GM12878 (cell line): ENCODE measurements at regions of chr19 and their contacts with region 1.

Region 1: GRCh38 chr19:49331616-49332055 is 3.6 kb upstream of the CD37 start:
- DNase-seq: peak; percentile 81
- ATAC-seq: peak; percentile 71
- H3K4me3 ChIP-seq: peak overlapping the region; percentile 50
- H3K27ac ChIP-seq: peak overlapping the region; percentile 87
- H3K4me1 ChIP-seq: peaks cover 79% of the 10 kb centered on the region
- H3K27me3 ChIP-seq: no peaks in the 10 kb centered on the region
- CTCF ChIP-seq: no peak
- EP300 ChIP-seq: no peak
- POLR2A ChIP-seq: no peak
- RAD21 ChIP-seq: no peak

Region 2: GRCh38 chr19:49272184-49272583 is 59.5 kb before region 1 on chr19:
- CTCF ChIA-PET with region 1: interaction called, 11 read pairs
- POLR2A ChIA-PET with region 1: interaction called, 6 read pairs
- RAD21 ChIA-PET with region 1: no interaction called
- SMC1A ChIA-PET with region 1: no interaction called
- in situ Hi-C with region 1: no loop called
- intact Hi-C with region 1: no loop called
- DNase-seq: no peak
- ATAC-seq: no peak
- H3K4me3 ChIP-seq: no peak overlapping the region
- H3K27ac ChIP-seq: no peak overlapping the region
- H3K4me1 ChIP-seq: no peaks in the 10 kb centered on the region
- H3K27me3 ChIP-seq: no peaks in the 10 kb centered on the region
- CTCF ChIP-seq: no peak
- EP300 ChIP-seq: no peak
- POLR2A ChIP-seq: no peak
- RAD21 ChIP-seq: no peak

Region 3: DNA sequence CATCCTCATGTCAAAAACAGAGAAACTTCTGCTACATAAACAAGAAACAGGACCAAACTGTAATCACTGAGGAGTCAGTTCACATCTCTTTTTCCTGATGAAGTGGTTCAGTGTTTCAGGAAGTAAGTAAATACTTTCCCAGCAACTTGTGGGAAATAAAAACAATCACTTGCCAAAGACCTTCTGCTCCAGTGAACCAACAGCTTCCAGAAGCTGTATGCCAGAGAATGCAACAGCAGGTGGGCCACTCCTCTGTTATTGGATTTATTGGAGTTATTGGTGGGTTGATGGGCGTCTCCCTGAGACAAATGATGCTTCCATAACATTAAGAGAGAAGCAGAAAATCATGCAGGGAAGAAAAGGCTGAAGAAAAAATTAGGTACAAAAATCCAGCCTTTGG is 16.5 kb before region 1 on chr19:
- CTCF ChIA-PET with region 1: interaction called, 12 read pairs
- POLR2A ChIA-PET with region 1: interaction called, 3 read pairs
- RAD21 ChIA-PET with region 1: no interaction called
- SMC1A ChIA-PET with region 1: interaction called, 5 read pairs
- in situ Hi-C with region 1: no loop called
- intact Hi-C with region 1: no loop called
- DNase-seq: no peak
- ATAC-seq: no peak
- H3K4me3 ChIP-seq: no peak overlapping the region
- H3K27ac ChIP-seq: no peak overlapping the region
- H3K4me1 ChIP-seq: no peaks in the 10 kb centered on the region
- H3K27me3 ChIP-seq: no peaks in the 10 kb centered on the region
- CTCF ChIP-seq: no peak
- EP300 ChIP-seq: no peak
- POLR2A ChIP-seq: no peak
- RAD21 ChIP-seq: no peak

Region 4: GRCh38 chr19:49473868-49474544 is 142.4 kb after region 1 on chr19 and contains the start of gene FLT3LG:
- CTCF ChIA-PET with region 1: interaction called, 7 read pairs
- POLR2A ChIA-PET with region 1: interaction called, 3 read pairs
- RAD21 ChIA-PET with region 1: interaction called, 7 read pairs
- SMC1A ChIA-PET with region 1: no interaction called
- in situ Hi-C with region 1: no loop called
- intact Hi-C with region 1: loop called (anchors 5 kb)
- DNase-seq: no peak
- ATAC-seq: peak; percentile 66
- H3K4me3 ChIP-seq: peak within 1 kb of the TSS; percentile 82
- H3K27ac ChIP-seq: peak within 1 kb of the TSS; percentile 66
- H3K4me1 ChIP-seq: peaks cover 32% of the 10 kb centered on the region
- H3K27me3 ChIP-seq: no peaks in the 10 kb centered on the region
- CTCF ChIP-seq: peak; percentile 91 to 97 (median 94)
- EP300 ChIP-seq: no peak
- POLR2A ChIP-seq: peak; percentile 69; the same call in 1 of the 2 replicates
- RAD21 ChIP-seq: peak; percentile 63
- polyA plus RNA-seq, gene FLT3LG: 0.68 to 1.6 TPM